GM12878 (cell line): ENCODE measurements at regions of chr2 and their contacts with region 1.

Region 1: DNA sequence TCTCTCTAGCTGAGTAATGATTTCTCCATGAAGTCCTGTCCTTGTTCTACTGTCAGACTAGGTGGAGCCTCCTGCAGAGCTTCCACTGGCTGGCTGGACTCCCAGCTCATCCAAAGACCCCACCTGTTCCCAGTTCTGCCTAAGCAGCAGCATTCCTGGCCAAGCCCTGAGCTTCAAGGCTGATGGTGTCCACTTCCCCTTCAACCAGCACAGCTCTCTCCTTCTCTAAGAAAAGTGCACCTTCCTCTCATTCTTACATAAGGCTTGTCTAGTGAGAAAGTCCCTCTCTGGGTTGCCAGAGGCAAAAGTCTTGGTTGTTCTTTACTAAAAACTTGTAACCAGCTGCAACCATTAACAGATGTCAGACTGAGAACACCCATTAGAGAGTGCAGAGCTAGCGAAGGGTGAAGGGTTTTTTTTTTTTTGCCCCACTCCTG is 58.9 kb downstream of the CXCR4 start:
- DNase-seq: peak; percentile 63
- ATAC-seq: peak; percentile 63
- H3K4me3 ChIP-seq: no peak overlapping the region
- H3K27ac ChIP-seq: peak overlapping the region; percentile 40; the same call in 1 of the 2 replicates
- H3K4me1 ChIP-seq: peaks cover 51% of the 10 kb centered on the region
- H3K27me3 ChIP-seq: no peaks in the 10 kb centered on the region
- CTCF ChIP-seq: no peak
- EP300 ChIP-seq: peak in 1 of 2 experiments; percentile 45; a peak in 1 of 4 replicates
- POLR2A ChIP-seq: no peak
- RAD21 ChIP-seq: peak; percentile 15; the same call in 1 of the 2 replicates

Region 2: DNA sequence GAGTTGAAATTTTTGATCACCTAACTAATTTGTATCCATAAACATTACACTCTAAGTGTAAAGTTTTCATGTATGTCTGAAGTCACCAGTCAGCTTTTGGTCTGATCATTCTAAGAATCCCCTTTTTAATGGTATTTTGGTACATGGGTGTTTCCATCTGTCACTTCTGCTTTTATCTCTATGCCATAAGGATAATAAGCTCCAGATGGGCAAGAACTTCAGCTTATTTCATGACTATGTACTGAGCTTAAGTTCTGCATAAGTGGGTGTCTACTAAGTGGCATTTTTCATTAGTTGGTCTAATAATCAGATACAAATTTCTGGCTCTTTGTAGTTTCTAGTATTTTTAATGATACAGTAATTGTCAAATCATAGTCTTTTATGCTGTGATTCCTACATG is 297.0 kb before region 1 on chr2:
- CTCF ChIA-PET with region 1: no interaction called
- POLR2A ChIA-PET with region 1: no interaction called
- RAD21 ChIA-PET with region 1: no interaction called
- SMC1A ChIA-PET with region 1: no interaction called
- in situ Hi-C with region 1: no loop called
- intact Hi-C with region 1: no loop called
- DNase-seq: no peak
- ATAC-seq: no peak
- H3K4me3 ChIP-seq: no peak overlapping the region
- H3K27ac ChIP-seq: no peak overlapping the region
- H3K4me1 ChIP-seq: no peaks in the 10 kb centered on the region
- H3K27me3 ChIP-seq: no peaks in the 10 kb centered on the region
- CTCF ChIP-seq: no peak
- EP300 ChIP-seq: no peak
- POLR2A ChIP-seq: no peak
- RAD21 ChIP-seq: no peak

Region 3: GRCh38 chr2:135913727-135914365 is 145.2 kb before region 1 on chr2:
- CTCF ChIA-PET with region 1: interaction called, 26 read pairs
- POLR2A ChIA-PET with region 1: no interaction called
- RAD21 ChIA-PET with region 1: interaction called, 17 read pairs
- SMC1A ChIA-PET with region 1: interaction called, 37 read pairs
- in situ Hi-C with region 1: no loop called
- intact Hi-C with region 1: loop called (anchors 2 kb)
- DNase-seq: no peak
- ATAC-seq: peak; percentile 75
- H3K4me3 ChIP-seq: no peak overlapping the region
- H3K27ac ChIP-seq: no peak overlapping the region
- H3K4me1 ChIP-seq: no peaks in the 10 kb centered on the region
- H3K27me3 ChIP-seq: no peaks in the 10 kb centered on the region
- CTCF ChIP-seq: peak; percentile 58 to 68 (median 63); a peak in 5 of 6 replicates
- EP300 ChIP-seq: no peak
- POLR2A ChIP-seq: no peak
- RAD21 ChIP-seq: peak; percentile 75

Region 4: DNA sequence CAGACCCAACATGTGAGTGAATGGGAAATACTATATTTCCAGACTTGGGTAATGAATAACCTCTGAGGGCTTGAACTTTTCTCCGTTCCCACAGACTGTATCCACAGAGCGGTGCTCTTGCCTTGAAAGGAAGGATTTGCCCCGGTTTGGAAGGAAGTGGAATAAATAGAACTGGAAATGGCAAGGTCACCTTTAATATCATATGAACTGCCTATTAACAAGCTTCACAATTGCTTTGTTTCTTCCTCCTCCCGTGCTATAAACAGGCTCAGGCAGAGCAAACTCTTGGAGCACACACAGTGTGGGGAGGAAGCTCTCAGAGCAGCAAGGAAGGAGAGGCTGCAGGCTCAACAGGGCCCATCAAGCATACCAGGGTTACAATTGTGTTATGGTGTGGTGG is 45.1 kb before region 1 on chr2:
- CTCF ChIA-PET with region 1: interaction called, 33 read pairs
- POLR2A ChIA-PET with region 1: interaction called, 35 read pairs
- RAD21 ChIA-PET with region 1: interaction called, 182 read pairs
- SMC1A ChIA-PET with region 1: interaction called, 961 read pairs
- in situ Hi-C with region 1: no loop called
- intact Hi-C with region 1: no loop called
- DNase-seq: no peak
- ATAC-seq: no peak
- H3K4me3 ChIP-seq: no peak overlapping the region
- H3K27ac ChIP-seq: no peak overlapping the region
- H3K4me1 ChIP-seq: peaks cover 3% of the 10 kb centered on the region; the same call in 1 of the 2 replicates
- H3K27me3 ChIP-seq: no peaks in the 10 kb centered on the region
- CTCF ChIP-seq: no peak
- EP300 ChIP-seq: no peak
- POLR2A ChIP-seq: no peak
- RAD21 ChIP-seq: no peak

Region 5: GRCh38 chr2:136086253-136087016 is 27.4 kb after region 1 on chr2:
- CTCF ChIA-PET with region 1: interaction called, 6 read pairs
- POLR2A ChIA-PET with region 1: no interaction called
- RAD21 ChIA-PET with region 1: interaction called, 5 read pairs
- SMC1A ChIA-PET with region 1: interaction called, 26 read pairs
- in situ Hi-C with region 1: no loop called
- intact Hi-C with region 1: no loop called
- DNase-seq: no peak
- ATAC-seq: peak; percentile 51
- H3K4me3 ChIP-seq: no peak overlapping the region
- H3K27ac ChIP-seq: no peak overlapping the region
- H3K4me1 ChIP-seq: no peaks in the 10 kb centered on the region
- H3K27me3 ChIP-seq: no peaks in the 10 kb centered on the region
- CTCF ChIP-seq: no peak
- EP300 ChIP-seq: no peak
- POLR2A ChIP-seq: no peak
- RAD21 ChIP-seq: no peak

Region 6: DNA sequence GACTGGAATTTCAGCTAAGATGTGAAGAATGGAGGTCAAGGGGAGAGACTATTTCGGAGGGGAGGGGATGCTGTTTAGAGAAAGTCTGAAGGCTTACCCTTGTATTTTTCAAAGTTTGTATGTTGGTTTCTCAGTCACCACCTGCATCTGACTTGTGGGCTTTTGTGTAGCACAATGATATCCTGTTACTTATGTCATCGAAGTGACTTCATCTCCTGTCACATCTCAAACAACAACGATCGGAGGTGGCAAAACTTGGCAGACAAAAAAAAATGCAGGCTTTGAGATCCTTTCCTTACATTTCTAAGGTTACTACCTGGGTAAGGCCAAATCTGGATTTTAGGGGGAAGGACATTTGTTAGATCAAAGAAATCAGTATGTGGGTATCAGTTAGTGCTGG is 70.5 kb after region 1 on chr2:
- CTCF ChIA-PET with region 1: interaction called, 6 read pairs
- POLR2A ChIA-PET with region 1: interaction called, 28 read pairs
- RAD21 ChIA-PET with region 1: interaction called, 301 read pairs
- SMC1A ChIA-PET with region 1: interaction called, 234 read pairs
- in situ Hi-C with region 1: no loop called
- intact Hi-C with region 1: loop called (anchors 1 kb)
- DNase-seq: no peak
- ATAC-seq: no peak
- H3K4me3 ChIP-seq: no peak overlapping the region
- H3K27ac ChIP-seq: no peak overlapping the region
- H3K4me1 ChIP-seq: peaks cover 24% of the 10 kb centered on the region
- H3K27me3 ChIP-seq: peaks cover 0 to 9% of the 10 kb centered on the region in 2 experiments; a peak in 2 of 4 replicates
- CTCF ChIP-seq: no peak
- EP300 ChIP-seq: peak in 1 of 2 experiments; percentile 73; a peak in 2 of 4 replicates
- POLR2A ChIP-seq: no peak
- RAD21 ChIP-seq: no peak

Region 7: DNA sequence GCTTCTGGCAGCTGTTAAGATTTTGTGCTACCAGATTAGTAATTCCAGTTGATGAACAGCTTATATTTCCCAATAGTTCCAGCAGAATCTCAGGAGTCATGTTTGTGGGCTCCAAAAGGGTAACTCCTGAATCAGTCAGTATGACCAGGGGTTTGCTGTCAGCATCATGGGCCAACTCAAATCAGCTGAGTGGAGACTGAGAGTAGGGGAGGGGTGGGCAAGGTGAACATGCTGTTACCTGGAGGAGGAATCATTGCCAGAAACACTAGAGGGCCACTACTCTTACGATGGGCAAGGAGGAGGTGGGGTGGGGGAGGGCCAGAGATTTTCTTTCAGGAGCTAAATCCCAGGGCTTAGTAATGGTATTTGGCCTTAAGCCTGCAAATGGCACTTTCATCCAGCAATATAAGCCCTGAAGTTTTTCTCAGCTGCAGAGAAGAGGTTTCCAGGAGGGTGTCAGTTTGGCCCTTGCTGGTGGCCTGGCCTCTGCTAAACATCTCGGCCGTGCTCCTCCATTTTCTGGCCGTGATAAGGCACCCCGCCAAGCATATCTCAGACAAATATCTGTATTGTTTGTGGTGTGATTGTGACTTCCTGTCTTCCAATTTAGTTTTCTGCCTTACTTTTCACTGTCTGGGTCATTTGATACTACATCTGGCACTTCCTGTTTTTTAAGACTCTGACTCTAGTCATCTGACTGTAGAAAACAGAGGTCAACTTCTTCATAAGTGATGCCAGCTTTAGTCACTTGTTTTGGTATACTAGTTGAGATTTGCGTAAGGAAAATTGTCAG is 179.4 kb after region 1 on chr2:
- CTCF ChIA-PET with region 1: interaction called, 3 read pairs
- POLR2A ChIA-PET with region 1: interaction called, 6 read pairs
- RAD21 ChIA-PET with region 1: interaction called, 57 read pairs
- SMC1A ChIA-PET with region 1: interaction called, 14 read pairs
- in situ Hi-C with region 1: no loop called
- intact Hi-C with region 1: no loop called
- DNase-seq: peak; percentile 78
- ATAC-seq: peak; percentile 89
- H3K4me3 ChIP-seq: no peak overlapping the region
- H3K27ac ChIP-seq: no peak overlapping the region
- H3K4me1 ChIP-seq: peaks cover 18% of the 10 kb centered on the region
- H3K27me3 ChIP-seq: no peaks in the 10 kb centered on the region
- CTCF ChIP-seq: no peak
- EP300 ChIP-seq: peak; percentile 97 to 99
- POLR2A ChIP-seq: no peak
- RAD21 ChIP-seq: no peak

Region 8: GRCh38 chr2:136378712-136379595 is 319.9 kb after region 1 on chr2:
- CTCF ChIA-PET with region 1: interaction called, 34 read pairs
- POLR2A ChIA-PET with region 1: interaction called, 17 read pairs
- RAD21 ChIA-PET with region 1: interaction called, 244 read pairs
- SMC1A ChIA-PET with region 1: interaction called, 272 read pairs
- in situ Hi-C with region 1: loop called (anchors 5 kb)
- intact Hi-C with region 1: loop called (anchors 2 kb)
- DNase-seq: no peak
- ATAC-seq: peak; percentile 55
- H3K4me3 ChIP-seq: no peak overlapping the region
- H3K27ac ChIP-seq: no peak overlapping the region
- H3K4me1 ChIP-seq: peaks cover 51% of the 10 kb centered on the region
- H3K27me3 ChIP-seq: no peaks in the 10 kb centered on the region
- CTCF ChIP-seq: peak; percentile 85 to 92 (median 86)
- EP300 ChIP-seq: no peak
- POLR2A ChIP-seq: no peak
- RAD21 ChIP-seq: peak; percentile 96